Posterior vena cava (tissue), 2 donors: ENCODE measurements at regions of chr6 and their contacts with region 1.

Region 1: DNA sequence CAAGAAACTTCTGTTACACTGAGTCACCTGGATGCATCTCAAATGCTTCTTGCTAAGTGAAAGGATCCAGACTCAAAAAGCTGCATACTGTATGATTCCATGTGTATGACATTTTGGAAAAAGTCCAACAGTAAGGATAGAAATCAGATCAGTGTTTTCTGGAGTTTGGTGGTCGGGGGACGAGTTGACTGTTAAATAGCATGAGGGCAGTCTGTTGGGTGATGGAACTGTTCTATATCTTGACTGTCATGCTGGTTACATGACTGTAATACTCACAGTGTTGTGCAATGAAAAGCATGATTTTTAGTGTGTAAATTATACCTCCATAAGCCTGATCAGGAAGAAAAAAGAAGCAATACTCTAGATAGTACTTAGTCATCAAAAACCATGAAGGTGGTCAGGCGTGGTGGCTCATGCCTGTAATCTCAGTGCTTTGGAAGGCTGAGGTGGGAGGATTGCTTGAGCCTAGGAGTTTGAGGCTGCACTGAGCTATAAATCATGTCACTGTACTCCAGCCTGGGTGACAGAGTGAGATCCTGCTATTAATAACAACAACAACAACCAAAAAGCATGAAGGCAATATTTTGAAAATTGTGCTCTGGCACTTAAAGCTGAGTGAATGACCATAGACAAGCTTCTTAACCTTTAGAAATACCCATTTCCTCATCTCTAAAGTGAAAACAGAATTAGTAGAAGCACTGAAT is 30.5 kb upstream of the SASH1 start:
- DNase-seq: no peak

Region 2: DNA sequence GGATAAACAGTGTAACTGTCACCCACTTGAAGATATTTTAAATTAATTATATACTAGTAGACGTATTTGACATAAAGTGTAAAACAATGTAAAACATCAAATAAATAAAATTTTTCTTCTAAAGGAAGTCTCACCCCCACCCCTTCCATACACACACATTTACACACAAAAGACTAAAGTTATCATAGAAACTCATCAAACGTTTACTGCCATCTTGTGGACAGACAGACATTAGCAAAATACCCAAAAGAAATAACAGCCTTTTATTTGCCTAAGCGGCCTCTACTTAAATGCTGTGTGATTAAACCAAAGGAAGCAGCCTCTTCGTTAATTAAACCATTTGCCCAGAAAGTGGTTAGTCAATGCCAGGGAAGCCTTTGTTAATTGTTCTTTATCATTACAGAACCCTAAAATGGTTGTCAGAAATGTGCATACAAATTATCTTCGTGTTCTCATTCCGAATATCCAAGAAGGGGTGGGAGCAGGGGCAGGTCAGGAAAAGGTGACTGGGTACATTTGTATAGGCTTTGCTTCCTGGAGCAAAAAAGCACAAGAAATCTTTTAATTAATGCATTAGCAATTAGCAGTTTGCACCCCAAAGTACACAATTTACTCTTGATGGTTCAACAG is 145.7 kb before region 1 on chr6:
- intact Hi-C with region 1: no loop called
- DNase-seq: no peak

Region 3: GRCh38 chr6:148342357-148343046 is 30.4 kb after region 1 on chr6 and contains the start of gene SASH1:
- intact Hi-C with region 1: loop called in 1 of 2 experiments (anchors 1 kb)
- DNase-seq: peak; percentile 87
- total RNA-seq, gene SASH1: 80.8 to 99.4 TPM